MCF 10A (cell line): ENCODE measurements at regions of chr13 and their contacts with region 1.

Region 1: DNA sequence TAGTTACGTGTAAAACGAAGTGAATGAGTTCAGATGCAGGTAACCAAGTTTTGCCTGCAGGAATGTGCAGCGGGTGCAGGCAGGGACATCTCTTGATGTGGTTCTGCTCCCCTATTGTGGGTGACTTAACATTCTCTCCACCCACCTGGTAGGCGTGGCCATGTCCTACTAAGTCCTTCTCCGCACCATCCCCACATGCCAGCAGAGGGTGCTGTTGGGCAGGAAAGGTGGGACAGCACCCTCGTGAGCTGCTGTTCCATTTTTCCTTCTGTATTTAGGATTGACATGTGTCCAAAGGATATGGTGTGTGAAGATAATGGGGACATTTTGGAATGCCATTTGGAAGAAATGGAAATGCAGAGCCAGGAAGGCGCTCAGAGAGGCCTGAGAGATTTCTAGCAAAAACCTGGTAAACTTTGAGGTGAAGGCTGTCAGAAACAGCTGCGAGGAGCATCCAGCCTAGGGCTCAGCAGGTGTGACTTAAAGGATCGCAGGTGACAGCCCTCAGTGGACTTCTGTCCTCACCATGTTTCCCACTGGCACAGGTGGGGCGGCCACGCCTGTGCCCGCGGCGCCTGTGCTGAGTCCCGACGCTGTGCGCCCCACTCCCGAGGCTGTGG is 26.2 kb upstream of the MCF2L start:
- DNase-seq: peak; percentile 96
- H3K4me3 Mint-ChIP-seq: peak overlapping the region; percentile 63
- H3K27ac Mint-ChIP-seq: no peak overlapping the region
- H3K4me1 Mint-ChIP-seq: peaks cover 6% of the 10 kb centered on the region
- H3K27me3 Mint-ChIP-seq: peaks cover 44% of the 10 kb centered on the region
- CTCF ChIP-seq: peak; percentile 91

Region 2: GRCh38 chr13:113162771-113163685 is 220.2 kb after region 1 on chr13:
- CTCF ChIA-PET with region 1: no interaction called
- POLR2A ChIA-PET with region 1: no interaction called
- intact Hi-C with region 1: no loop called
- DNase-seq: no peak
- H3K4me3 Mint-ChIP-seq: no peak overlapping the region
- H3K27ac Mint-ChIP-seq: no peak overlapping the region
- H3K4me1 Mint-ChIP-seq: no peaks in the 10 kb centered on the region
- H3K27me3 Mint-ChIP-seq: peaks cover 23% of the 10 kb centered on the region
- CTCF ChIP-seq: no peak

Region 3: DNA sequence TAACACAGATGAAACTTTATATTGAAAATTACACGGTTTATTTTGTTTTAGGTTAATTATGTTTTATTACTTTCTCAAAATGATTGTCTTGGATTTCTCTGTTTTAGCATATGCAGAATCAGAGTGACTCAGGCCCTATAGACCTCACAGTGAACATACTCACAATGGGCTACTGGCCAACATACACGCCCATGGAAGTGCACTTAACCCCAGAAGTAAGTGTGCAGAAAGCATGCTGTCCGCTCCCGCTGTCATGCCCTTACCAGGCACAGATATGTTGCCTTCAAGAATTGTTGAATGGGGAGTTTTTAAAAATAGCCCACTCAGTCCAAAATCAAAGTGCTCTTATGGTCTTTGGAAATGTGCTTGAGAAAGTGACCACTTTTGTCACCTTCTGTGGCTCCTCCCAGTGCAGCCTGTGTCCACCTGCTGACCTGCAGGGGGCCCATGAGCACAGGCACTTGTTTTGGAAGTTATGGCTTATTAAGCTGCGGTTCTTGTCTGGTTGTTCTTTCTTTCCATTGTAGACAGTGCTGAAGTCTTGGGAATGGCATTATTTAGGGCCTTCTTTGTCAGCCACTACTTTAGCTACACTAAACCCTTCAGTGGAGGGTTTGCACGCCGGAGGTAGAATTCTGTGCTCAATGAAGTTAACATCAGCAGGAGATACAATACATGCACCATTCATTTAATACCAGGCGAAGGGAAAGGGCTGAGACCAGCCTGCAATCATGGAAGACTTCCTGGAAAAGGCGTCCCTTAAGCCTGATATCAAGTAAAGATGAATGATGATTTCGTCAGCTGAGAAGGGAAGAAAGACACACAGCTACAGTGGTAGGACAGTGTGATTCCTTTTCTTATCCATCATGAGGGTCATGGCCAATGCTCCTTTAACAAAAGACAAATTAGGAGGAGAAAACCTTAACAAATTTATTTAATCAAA is 303.3 kb after region 1 on chr13:
- CTCF ChIA-PET with region 1: no interaction called
- POLR2A ChIA-PET with region 1: no interaction called
- intact Hi-C with region 1: no loop called
- DNase-seq: peak; percentile 5
- H3K4me3 Mint-ChIP-seq: no peak overlapping the region
- H3K27ac Mint-ChIP-seq: no peak overlapping the region
- H3K4me1 Mint-ChIP-seq: no peaks in the 10 kb centered on the region
- H3K27me3 Mint-ChIP-seq: no peaks in the 10 kb centered on the region
- CTCF ChIP-seq: no peak

Region 4: GRCh38 chr13:113393563-113394338 is 451.0 kb after region 1 on chr13:
- CTCF ChIA-PET with region 1: interaction called, 4 read pairs
- POLR2A ChIA-PET with region 1: no interaction called
- intact Hi-C with region 1: loop called (anchors 1 kb)
- DNase-seq: peak; percentile 72
- H3K4me3 Mint-ChIP-seq: peak overlapping the region; percentile 77
- H3K27ac Mint-ChIP-seq: no peak overlapping the region
- H3K4me1 Mint-ChIP-seq: peaks cover 5% of the 10 kb centered on the region
- H3K27me3 Mint-ChIP-seq: peaks cover 16% of the 10 kb centered on the region
- CTCF ChIP-seq: peak; percentile 78

Region 5: GRCh38 chr13:113448885-113449692 is 506.3 kb after region 1 on chr13:
- CTCF ChIA-PET with region 1: no interaction called
- POLR2A ChIA-PET with region 1: no interaction called
- intact Hi-C with region 1: loop called (anchors 2 kb)
- DNase-seq: peak; percentile 95
- H3K4me3 Mint-ChIP-seq: peak overlapping the region; percentile 85
- H3K27ac Mint-ChIP-seq: peak overlapping the region; percentile 94
- H3K4me1 Mint-ChIP-seq: peaks cover 6% of the 10 kb centered on the region
- H3K27me3 Mint-ChIP-seq: no peaks in the 10 kb centered on the region
- CTCF ChIP-seq: no peak

Region 6: GRCh38 chr13:113562085-113562749 is 619.4 kb after region 1 on chr13:
- CTCF ChIA-PET with region 1: interaction called, 3 read pairs
- POLR2A ChIA-PET with region 1: no interaction called
- intact Hi-C with region 1: loop called (anchors 2 kb)
- DNase-seq: peak; percentile 58
- H3K4me3 Mint-ChIP-seq: no peak overlapping the region
- H3K27ac Mint-ChIP-seq: no peak overlapping the region
- H3K4me1 Mint-ChIP-seq: peaks cover 6% of the 10 kb centered on the region
- H3K27me3 Mint-ChIP-seq: no peaks in the 10 kb centered on the region
- CTCF ChIP-seq: peak; percentile 51